MCF 10A (cell line): ENCODE measurements at regions of chr6 and their contacts with region 1.

Region 1: DNA sequence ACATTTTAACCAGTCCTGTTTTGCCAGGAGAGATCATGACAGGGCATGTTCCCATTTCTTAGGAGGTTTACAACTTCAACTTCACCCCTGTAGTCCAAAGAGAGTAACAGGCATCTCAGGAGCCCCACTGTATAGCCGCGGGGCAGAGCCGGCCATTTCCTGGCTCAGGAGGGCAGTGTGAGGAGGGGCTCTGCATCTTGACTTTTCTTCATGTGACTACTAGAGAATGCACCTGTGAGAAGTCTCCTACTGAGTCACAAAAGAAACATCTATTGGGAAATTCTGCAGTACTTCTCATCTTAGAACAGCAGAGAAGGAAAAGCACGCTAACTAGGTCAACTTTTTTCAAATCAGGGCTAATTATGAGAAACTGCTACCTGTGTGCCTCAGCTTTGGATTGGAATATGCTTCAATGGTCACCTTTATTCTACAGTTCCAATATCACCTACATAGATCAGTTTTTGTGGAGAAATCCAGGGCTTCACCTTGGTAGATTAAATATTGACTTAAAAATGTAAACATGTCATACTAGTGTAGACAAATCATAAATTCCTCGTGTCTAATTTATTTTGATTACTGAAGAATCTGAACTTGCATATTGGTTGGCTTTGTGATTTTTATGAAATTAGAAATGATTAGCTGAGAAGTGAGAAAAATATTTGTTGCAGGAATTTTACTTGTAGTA is 28.6 kb upstream of the SIM1 start:
- DNase-seq: peak; percentile 61
- H3K4me3 Mint-ChIP-seq: peak overlapping the region; percentile 7
- H3K27ac Mint-ChIP-seq: peak overlapping the region; percentile 84
- H3K4me1 Mint-ChIP-seq: peaks cover 11% of the 10 kb centered on the region
- H3K27me3 Mint-ChIP-seq: no peaks in the 10 kb centered on the region
- CTCF ChIP-seq: no peak

Region 2: DNA sequence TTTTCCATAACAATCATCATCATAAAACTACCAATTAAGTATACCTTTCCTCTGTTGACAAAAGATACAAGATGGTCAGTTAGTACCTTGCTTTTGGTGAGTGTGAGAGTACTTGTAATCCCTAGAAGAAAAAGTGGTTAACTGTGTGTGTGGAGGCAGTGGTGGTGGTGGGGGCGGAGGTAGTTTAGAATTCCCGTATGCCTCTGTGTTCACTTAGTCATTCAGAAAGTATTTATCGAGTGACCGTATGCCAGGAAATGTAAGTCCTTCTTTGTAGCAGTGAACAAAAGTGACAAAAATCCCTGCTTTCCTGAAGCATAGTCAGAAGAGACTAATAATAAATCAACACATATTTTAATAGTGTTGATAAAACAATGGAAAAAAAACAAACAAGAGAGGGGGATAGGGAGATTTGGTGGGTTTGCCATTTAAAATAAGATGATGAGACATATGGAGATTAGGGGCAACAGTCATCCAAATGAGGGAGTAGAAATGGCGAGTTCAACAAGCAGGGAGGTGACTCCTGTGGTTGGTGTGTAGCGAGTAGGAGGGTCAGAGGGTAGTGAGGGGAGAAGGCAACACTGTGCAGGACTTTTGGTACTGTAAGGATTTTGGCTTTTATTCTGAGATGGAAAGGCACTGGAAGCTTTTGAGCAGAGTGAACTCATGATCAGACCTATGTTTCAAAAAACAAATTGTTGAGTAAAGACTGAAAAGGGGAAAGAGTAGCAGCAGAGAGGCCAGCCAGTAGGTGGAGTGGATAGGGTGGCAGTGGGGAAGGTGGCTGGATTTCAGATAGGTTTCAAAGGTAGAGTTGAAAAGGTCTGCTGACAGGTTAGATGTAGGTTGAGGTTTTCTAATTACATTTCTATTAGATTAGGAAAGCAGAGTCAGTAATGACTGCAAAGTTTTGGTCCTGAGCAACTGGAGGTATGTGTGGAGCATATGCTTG is 11.7 kb after region 1 on chr6:
- CTCF ChIA-PET with region 1: interaction called, 4 read pairs
- POLR2A ChIA-PET with region 1: interaction called, 10 read pairs
- intact Hi-C with region 1: no loop called
- DNase-seq: peak; percentile 71
- H3K4me3 Mint-ChIP-seq: no peak overlapping the region
- H3K27ac Mint-ChIP-seq: no peak overlapping the region
- H3K4me1 Mint-ChIP-seq: no peaks in the 10 kb centered on the region
- H3K27me3 Mint-ChIP-seq: no peaks in the 10 kb centered on the region
- CTCF ChIP-seq: no peak